AG04449 (cell line): ENCODE measurements at regions of chr12 and their contacts with region 1.

Region 1: DNA sequence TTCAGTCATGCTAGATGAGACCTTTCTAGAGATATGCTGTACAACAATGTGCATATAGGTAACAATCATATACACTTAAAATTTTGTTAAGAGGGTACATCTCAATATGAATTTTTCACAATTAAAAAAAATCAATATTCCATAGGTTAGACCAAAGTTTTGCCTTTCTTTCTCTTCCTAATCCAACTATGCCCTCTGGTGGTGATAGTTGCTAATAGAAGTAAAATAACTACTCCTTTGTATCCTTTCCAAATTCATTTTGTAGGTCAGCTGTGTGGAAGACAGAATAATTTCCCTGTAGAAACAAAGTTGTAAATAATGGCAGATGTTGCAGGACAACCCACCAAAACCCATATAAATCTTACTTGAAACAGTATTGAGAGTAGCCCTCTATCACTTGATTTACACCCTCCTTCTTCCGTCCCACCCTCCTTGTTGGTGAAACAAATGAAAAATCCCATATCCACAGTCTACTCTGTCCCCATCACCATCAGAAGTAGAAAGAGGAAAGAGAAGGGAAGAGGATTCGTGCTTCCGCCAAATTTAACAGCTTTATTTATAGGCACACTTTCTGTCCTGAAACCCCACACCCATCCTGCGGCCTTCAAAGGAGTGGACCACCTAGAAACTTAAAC is 34.2 kb upstream of the KICS2 start:
- DNase-seq: no peak
- H3K4me3 ChIP-seq: no peak overlapping the region
- CTCF ChIP-seq: peak; percentile 39

Region 2: DNA sequence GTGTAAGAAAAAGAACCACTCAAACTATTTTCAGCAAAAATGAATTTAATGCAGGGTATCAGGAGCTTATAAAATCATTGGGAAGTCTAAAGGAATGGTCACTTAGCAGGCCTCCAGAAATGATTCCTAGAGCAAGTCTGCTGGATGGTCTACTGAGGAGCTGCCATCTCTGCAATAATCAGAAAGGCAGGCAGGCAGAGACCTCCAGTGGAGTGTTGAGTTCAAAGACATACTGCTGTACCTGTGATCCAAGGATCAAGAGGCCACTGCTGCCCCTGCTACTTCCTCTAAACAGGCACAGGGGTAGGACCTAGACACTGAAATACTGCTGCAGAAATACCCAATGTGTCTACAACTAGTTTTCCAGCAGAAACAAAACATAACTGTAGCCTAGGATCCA is 19.7 kb before region 1 on chr12:
- CTCF ChIA-PET with region 1: interaction called, 24 read pairs
- POLR2A ChIA-PET with region 1: no interaction called
- DNase-seq: no peak
- H3K4me3 ChIP-seq: no peak overlapping the region
- CTCF ChIP-seq: peak; percentile 20

Region 3: GRCh38 chr12:64286521-64286920 is 30.2 kb after region 1 on chr12:
- CTCF ChIA-PET with region 1: no interaction called
- POLR2A ChIA-PET with region 1: no interaction called
- DNase-seq: no peak
- H3K4me3 ChIP-seq: no peak overlapping the region
- CTCF ChIP-seq: no peak

Region 4: DNA sequence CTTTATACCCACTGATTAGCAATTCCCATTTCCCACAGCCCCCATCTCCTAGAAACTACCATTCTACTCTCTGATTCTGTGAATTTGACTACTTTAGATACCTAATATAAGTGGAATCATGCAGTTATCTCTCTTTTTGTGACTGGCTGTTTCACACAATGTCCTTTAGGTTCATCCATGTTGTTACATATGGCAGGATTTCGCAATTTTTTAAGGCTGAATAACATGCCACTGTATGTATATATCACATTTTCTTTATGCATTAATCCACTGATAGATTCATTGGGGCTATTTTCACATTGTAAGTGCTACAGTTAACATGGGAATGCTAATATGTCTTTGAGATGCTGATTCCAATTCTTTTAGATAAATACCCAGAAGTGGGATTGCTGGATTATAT is 183.8 kb after region 1 on chr12:
- CTCF ChIA-PET with region 1: no interaction called
- POLR2A ChIA-PET with region 1: no interaction called
- DNase-seq: no peak
- H3K4me3 ChIP-seq: no peak overlapping the region
- CTCF ChIP-seq: no peak